ENCODE measurements at regions of chr14 and their contacts with region 1.

Region 1: DNA sequence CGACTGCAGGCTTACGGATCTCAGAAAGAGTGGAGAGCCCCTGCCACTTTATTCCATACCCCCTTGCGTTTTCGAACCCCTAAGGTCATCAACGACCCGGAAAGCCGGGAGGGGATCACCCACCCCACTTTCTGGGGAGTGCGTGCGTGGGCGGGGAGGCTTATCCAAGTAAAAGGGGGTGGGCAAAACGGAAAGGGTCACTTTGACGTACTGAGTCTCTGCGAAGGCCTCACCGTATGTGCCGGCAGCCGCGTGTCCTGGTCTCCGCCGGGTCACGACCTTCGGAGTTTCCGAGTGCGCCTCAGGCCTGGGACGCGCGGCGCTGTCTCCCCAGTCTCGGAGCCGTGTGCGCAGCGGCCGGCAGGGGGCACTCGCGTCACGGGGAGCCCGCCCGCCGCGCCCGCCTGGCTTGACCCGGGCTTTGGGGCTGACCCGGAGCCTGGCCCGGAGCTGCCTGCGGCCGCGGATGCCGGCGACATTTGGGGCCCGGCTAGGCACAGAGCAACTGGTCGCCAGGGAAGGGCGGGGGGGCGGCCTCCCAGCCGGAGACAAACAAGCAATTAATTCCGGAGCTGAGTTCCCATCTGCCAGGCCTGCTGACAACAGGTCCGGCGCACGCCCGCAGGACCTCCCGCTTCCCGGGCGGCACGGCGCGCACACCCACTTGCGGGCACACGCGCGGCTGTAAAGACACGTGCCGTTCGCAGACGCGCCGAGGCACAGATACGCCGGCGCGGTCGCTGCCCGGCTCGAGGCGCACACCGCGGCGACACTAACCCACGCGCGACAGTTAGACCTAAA is 890 bp upstream of the KIF26A start:
- DNase-seq: peak; percentile 68 to 90 (median 90)
- ATAC-seq: peak; percentile 83
- H3K4me3 ChIP-seq: peak overlapping the region; percentile 75
- H3K27ac ChIP-seq: no peak overlapping the region
- H3K4me1 ChIP-seq: no peaks in the 10 kb centered on the region
- H3K27me3 ChIP-seq: no peaks in the 10 kb centered on the region

Region 2: DNA sequence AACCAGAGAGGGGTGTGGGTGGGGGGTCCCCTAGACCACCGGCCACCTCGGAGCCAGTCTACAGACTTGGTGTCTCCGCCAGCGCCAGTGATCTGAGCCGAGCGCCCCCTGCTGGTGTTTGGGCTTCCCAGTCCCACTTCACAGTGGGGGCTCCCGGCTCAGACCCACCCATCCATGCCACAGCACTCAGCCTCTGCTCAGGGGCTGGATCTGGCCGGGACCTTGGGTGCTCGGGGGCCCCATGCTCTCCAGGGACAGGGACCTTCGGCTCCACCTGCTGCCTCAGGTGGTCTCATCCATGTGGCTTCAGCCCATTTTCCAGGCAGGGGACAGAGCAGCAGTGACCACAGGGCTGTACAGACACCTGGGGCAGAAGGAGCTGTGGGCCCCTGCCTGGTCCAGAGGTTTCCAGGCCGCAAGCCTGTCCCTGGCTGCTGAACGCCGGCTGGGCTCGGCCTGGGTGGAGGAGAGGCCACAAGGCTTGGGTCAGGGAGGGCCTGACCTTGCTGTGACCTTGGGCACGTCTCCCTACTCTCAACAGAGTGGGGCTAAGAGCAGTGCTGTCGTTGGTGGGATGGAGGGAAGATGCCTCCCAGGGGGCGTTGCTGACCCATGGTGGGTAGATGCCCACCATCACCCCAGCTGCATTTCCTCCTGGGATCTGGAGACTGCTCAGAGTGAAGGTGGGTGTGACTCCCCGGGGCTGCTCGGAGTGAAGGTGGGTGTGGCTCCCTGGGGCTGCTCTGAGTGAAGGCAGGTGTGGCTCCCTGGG is 87.2 kb after region 1 on chr14:
- intact Hi-C with region 1: loop called in 1 of 4 experiments (anchors 10 kb)
- DNase-seq: peak; percentile 53 to 80 (median 79)
- ATAC-seq: peak; percentile 12 to 53
- H3K4me3 ChIP-seq: no peak overlapping the region
- H3K27ac ChIP-seq: no peak overlapping the region
- H3K4me1 ChIP-seq: peaks cover 8% of the 10 kb centered on the region
- H3K27me3 ChIP-seq: no peaks in the 10 kb centered on the region

Region 3: DNA sequence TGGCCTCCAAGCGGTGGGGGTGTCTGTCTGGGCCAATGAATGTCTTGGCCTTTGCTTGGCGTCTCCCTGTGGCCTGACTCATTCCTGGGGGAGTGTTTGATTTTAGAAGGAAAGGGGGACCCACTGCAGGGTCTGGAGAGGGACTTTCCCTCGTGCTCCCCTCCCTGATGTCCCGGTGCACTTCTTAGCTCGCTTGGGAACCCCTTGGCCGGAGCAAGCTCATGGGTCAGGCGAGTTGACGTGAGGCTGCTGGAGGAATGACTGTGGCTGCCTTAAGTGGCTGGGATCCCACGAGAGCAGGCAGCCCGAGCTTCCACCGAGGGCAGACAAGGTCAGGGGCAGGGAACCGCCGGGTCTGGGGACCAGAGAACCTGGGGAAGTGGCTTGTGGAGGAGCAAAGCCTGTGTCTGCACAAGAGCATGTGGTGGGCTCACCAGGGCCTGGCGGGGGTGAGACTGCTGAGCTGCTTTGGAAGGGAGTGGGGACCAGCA is 223.6 kb after region 1 on chr14:
- intact Hi-C with region 1: loop called in 1 of 4 experiments (anchors 10 kb)
- DNase-seq: peak in 1 of 3 donors; percentile 48
- ATAC-seq: no peak
- H3K4me3 ChIP-seq: no peak overlapping the region
- H3K27ac ChIP-seq: no peak overlapping the region
- H3K4me1 ChIP-seq: no peaks in the 10 kb centered on the region
- H3K27me3 ChIP-seq: no peaks in the 10 kb centered on the region

Region 4: DNA sequence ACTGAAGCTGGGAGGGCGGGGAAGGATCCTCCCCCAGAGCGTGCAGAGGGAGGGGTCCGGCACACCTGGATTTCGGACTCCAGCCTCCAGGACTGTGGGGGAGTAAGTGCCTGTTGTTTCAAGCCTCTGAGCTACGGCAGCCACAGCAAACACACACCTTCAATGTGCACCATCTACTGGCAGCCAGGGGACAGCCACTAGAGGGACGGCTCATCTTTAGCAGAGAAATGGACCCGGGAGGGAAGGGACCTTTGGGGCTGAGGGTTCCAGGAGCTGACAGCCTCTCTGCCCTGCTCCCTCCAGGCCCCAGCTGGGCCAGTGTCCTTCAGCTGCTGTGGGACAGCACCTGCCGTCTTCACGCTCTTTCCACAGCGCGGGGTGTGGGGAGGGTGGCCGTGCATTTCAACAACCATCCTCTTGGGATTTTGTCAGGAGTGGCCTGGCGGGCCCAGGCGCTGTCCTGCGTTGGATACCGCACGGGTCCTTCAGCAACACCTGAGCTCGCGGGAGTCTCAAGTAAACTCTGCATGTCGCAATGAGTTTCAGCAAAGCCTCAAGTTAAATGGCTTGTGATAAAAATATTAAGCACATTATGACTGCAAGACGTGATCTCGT is 232.9 kb after region 1 on chr14:
- intact Hi-C with region 1: loop called in 2 of 4 experiments (anchors 5 to 10 kb)
- DNase-seq: peak in 2 of 3 donors; percentile 55 to 56
- ATAC-seq: peak; percentile 41 to 66
- H3K4me3 ChIP-seq: no peak overlapping the region
- H3K27ac ChIP-seq: no peak overlapping the region
- H3K4me1 ChIP-seq: no peaks in the 10 kb centered on the region
- H3K27me3 ChIP-seq: no peaks in the 10 kb centered on the region

Region 5: DNA sequence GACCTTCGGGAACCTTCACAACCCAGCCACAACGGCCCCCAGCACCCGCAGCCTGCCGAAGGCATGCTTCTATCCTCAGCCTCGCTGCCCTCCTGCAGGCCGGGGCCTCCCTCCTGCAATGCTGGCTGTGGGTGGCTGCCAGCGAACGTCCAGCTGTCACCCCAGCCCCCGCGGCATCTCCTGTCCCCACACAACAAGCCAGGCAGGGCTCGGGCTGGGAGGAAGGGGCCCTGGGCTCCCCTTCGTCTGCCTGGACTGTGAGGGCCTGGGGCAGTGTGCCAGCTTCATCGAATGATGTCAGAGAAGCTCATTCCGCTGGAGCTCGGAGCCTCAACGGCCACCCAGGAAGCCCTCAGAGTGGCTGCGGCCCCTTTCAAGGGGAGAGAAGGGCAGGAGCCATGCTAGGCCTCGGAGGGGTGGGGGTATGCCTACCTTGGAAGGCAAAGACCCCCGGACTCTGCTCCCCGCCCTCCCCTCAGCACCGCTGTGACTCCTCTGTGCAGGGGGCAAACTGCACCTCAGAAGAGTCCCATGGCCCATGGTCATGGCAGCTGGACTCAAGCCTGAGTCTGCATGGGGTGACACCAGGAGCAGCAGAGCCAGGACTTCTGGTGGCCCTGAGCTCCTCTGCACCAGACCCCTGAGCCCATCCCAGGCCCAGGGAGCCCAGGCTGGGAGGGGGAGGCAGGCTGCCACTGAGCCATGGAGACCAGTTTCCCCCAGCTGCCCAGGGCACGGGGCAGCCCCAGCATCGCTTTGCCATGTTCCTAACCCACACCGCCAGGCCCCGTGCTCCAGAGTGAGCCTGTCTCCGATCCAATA is 417.3 kb after region 1 on chr14:
- intact Hi-C with region 1: loop called in 2 of 4 experiments (anchors 5 kb)
- DNase-seq: peak; percentile 26 to 61 (median 54)
- ATAC-seq: no peak
- H3K4me3 ChIP-seq: no peak overlapping the region
- H3K27ac ChIP-seq: no peak overlapping the region
- H3K4me1 ChIP-seq: no peaks in the 10 kb centered on the region
- H3K27me3 ChIP-seq: no peaks in the 10 kb centered on the region

Region 6: GRCh38 chr14:104563742-104564615 is 426.5 kb after region 1 on chr14:
- intact Hi-C with region 1: loop called (anchors 2 to 5 kb)
- DNase-seq: peak; percentile 78 to 91 (median 90)
- ATAC-seq: peak; percentile 75 to 84
- H3K4me3 ChIP-seq: no peak overlapping the region
- H3K27ac ChIP-seq: no peak overlapping the region
- H3K4me1 ChIP-seq: no peaks in the 10 kb centered on the region
- H3K27me3 ChIP-seq: no peaks in the 10 kb centered on the region

Region 7: GRCh38 chr14:104639889-104640548 is 502.5 kb after region 1 on chr14:
- intact Hi-C with region 1: loop called (anchors 2 to 10 kb)
- DNase-seq: peak in 2 of 3 donors; percentile 84 to 85
- ATAC-seq: peak; percentile 88
- H3K4me3 ChIP-seq: no peak overlapping the region
- H3K27ac ChIP-seq: no peak overlapping the region
- H3K4me1 ChIP-seq: no peaks in the 10 kb centered on the region
- H3K27me3 ChIP-seq: no peaks in the 10 kb centered on the region

Measured in right cardiac atrium (tissue), 5 donors.